Activated CD4-positive, alpha-beta T cell treated with anti-CD3 and anti-CD28 coated beads for 36 hours (primary cell): ENCODE measurements at regions of chr6 and their contacts with region 1.

Region 1: DNA sequence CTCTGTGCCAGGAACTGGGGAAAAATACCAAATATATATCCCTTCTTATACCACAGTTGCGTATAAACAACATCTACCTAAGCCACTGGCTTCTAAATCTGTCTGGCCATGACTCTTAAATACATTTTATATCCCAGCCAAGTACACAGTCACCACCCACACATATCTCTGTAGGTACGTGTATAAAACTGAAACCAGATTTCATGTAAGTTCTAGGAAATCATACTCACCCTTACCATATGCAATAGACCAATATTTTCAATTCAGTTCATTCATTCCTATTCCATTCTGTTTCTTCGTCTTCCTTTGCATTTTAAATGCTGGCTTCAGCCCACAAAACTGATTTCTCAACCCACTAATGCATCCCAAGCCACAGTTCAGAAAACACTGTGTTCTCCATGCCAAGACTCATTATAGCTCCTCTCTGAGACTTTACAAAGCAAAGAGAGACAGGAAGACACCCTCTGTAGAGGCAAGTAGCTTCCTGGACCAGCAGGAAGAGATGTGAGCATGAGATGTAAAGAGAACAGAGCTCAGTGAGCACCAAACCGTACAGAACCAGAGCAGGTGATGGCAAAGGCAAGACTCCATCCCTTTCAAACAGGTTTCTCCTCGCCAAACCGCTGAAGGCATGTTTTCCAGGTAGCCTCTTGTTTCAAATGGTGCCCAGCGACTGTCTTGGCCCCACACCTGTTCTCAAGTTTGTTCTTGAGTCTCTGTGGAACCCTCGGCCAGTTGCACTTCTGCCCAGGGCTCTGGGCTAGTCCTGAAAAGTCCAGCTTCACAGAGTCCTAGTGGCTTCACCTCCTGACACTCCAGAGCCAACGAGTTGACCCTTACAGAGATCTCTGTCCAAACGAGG is 18.7 kb downstream of the FAM50B start:
- DNase-seq: peak; percentile 23
- ATAC-seq: peak; percentile 89
- H3K4me3 Mint-ChIP-seq: peak overlapping the region; percentile 2
- H3K27ac Mint-ChIP-seq: peak overlapping the region; percentile 93
- H3K4me1 Mint-ChIP-seq: peaks cover 35% of the 10 kb centered on the region
- H3K27me3 Mint-ChIP-seq: peaks cover 9% of the 10 kb centered on the region

Region 2: DNA sequence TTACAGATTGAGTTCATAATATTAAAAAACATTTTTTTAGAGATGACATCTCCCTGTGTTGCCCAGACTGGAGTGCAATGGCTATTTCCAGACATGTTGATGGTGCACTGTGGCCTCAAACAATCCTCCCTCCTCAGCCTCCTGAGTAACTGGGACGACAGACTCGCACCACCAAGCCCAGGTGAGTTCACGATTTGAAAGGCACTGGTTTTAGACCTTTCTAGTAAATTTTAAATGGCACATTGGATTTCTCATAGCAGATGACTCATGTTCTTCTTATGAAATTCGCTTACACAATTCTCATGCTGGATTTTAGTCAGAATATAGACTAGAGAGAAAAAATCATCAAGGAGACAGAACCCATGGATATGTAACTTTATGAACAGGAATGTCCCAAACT is 98.3 kb before region 1 on chr6:
- CTCF ChIA-PET with region 1: no interaction called
- POLR2A ChIA-PET with region 1: no interaction called
- intact Hi-C with region 1: loop called in 1 of 2 experiments (anchors 1 kb)
- DNase-seq: peak; percentile 34
- ATAC-seq: peak; percentile 78
- H3K4me3 Mint-ChIP-seq: no peak overlapping the region
- H3K27ac Mint-ChIP-seq: peak overlapping the region; percentile 25
- H3K4me1 Mint-ChIP-seq: peaks cover 12% of the 10 kb centered on the region
- H3K27me3 Mint-ChIP-seq: peaks cover 19% of the 10 kb centered on the region